ENCODE measurements at regions of chr1 and their contacts with region 1.

Region 1: DNA sequence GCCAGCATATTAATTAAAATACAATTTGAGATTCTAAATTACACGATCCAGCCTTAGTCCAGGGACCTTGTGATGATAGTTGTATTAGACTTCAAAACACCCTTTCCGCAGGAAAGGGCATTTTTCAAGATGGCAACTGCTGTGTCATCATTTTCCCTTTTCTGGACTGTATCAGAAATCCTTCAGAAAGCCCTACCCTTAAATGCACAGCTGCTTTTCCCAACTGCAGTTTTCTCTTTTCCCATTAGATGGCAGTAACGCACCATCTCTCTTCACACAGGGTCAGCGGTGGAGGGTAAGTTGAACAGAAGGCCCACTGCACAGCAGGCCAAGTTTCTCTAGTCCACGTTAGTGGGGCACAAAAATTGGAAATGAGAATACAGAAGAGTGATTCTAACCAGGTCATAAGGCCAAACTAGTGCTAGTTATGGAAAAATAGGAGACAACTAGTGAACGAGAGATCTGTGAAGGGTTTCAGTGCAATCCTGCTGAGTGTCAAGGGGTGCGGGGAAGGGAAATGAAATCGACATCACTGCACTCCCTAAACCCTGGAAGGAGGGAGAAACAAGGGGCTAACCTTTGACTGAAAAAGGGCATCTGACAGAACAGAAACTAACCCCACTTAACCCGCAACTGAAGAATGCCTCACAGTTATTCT is 22.1 kb upstream of the TDRD10 start:
- DNase-seq: peak; percentile 74
- H3K4me3 ChIP-seq: no peak overlapping the region
- H3K27ac ChIP-seq: no peak overlapping the region
- H3K4me1 ChIP-seq: peaks cover 11% of the 10 kb centered on the region
- H3K27me3 ChIP-seq: no peaks in the 10 kb centered on the region
- CTCF ChIP-seq: peak; percentile 96 to 98

Region 2: GRCh38 chr1:154324669-154325582 is 155.0 kb before region 1 on chr1 and contains the start of gene ATP8B2:
- CTCF ChIA-PET with region 1: no interaction called
- dilution Hi-C with region 1: no loop called
- in situ Hi-C with region 1: no loop called
- intact Hi-C with region 1: loop called (anchors 2 kb)
- DNase-seq: peak; percentile 53
- H3K4me3 ChIP-seq: peak within 1 kb of the TSS; percentile 55 to 65 (median 63)
- H3K27ac ChIP-seq: no peak within 1 kb of the TSS
- H3K4me1 ChIP-seq: peaks cover 29% of the 10 kb centered on the region
- H3K27me3 ChIP-seq: no peaks in the 10 kb centered on the region
- CTCF ChIP-seq: peak; percentile 79 to 92
- total RNA-seq, gene ATP8B2: 11.5 TPM

Region 3: DNA sequence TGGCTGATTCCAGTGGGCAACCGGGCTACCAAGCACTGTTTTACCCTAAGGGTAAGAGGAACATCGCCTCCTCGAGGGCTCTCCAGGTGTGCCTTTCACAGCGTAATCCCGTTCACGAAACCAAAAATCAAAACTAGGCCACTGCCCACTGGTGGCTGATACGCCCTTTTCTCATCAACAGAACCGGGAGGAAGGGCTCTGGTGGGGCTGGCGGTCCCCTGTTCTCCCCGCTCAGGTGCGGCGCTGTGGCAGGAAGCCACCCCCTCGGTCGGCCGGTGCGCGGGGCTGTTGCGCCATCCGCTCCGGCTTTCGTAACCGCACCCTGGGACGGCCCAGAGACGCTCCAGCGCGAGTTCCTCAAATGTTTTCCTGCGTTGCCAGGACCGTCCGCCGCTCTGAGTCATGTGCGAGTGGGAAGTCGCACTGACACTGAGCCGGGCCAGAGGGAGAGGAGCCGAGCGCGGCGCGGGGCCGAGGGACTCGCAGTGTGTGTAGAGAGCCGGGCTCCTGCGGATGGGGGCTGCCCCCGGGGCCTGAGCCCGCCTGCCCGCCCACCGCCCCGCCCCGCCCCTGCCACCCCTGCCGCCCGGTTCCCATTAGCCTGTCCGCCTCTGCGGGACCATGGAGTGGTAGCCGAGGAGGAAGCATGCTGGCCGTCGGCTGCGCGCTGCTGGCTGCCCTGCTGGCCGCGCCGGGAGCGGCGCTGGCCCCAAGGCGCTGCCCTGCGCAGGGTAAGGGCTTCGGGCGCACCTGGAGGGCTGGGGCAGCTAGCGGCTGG is 74.7 kb before region 1 on chr1 and contains the start of gene IL6R:
- CTCF ChIA-PET with region 1: interaction called, 5 read pairs
- dilution Hi-C with region 1: no loop called
- in situ Hi-C with region 1: no loop called
- intact Hi-C with region 1: loop called (anchors 1 kb)
- DNase-seq: peak; percentile 94
- H3K4me3 ChIP-seq: peak within 1 kb of the TSS; percentile 64 to 91 (median 84)
- H3K27ac ChIP-seq: peak within 1 kb of the TSS; percentile 83
- H3K4me1 ChIP-seq: peaks cover 33% of the 10 kb centered on the region
- H3K27me3 ChIP-seq: no peaks in the 10 kb centered on the region
- CTCF ChIP-seq: peak; percentile 14 to 63
- total RNA-seq, gene IL6R: 11.4 to 28.7 TPM

Region 4: DNA sequence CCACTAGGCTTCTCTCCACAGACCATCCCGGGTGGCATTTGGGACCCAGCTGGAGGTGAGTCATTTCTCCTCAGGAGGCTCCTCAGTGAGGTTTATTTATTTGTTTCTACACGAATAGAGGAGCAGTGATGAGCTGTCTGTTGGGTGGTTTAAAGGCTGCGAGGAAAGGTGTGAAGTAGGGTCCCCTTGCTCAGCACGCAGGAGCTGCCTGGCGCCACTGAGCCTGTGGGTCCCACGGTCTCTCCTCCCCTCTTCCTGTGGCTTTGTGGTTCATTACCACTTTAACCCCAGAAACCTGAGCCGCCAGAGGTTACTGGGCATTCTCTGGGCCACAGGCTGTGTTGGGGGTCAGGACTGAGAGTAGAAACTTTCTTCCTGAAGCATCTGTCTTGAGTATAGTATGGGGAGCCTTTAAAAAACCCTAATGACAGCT is 34.8 kb before region 1 on chr1:
- CTCF ChIA-PET with region 1: no interaction called
- dilution Hi-C with region 1: no loop called
- in situ Hi-C with region 1: no loop called
- intact Hi-C with region 1: no loop called
- DNase-seq: peak; percentile 46
- H3K4me3 ChIP-seq: no peak overlapping the region
- H3K27ac ChIP-seq: no peak overlapping the region
- H3K4me1 ChIP-seq: peaks cover 12% of the 10 kb centered on the region
- H3K27me3 ChIP-seq: no peaks in the 10 kb centered on the region
- CTCF ChIP-seq: no peak

Region 5: DNA sequence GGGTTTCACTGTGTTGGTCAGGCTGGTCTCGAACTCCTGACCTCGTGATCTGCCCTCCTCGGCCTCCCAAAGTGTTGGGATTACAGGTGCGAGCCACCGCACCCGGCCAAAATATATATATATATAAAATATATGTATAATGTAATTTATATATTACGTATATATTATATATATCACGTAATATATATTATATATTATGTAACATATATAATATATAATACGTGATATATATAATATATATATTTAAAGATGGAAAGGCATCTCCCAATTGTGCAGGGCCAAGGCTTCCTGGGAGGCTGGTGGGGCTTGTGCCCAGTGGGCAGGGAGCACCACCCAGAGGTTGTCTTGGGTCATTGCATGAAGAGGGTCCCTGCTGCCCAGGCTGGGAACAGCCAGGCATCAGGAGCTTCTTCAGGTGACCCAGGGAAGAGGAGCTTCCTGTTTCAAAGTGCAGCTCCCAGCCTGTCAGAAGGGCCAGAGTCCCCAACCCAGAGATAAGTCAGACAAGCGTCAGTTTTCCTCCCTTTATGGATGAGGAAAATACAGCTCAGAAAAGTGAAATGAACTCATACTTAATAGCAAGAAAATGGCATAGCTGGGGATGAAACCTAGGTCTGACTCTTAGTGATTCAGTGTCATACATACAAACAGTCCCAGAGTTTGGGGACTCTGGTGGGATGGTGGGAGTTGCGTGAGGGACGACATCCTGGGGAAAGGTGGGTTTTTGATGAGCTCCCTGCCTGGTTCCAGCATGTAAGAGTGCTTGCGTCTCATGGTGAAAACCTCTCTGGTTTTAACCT is 66.6 kb after region 1 on chr1:
- CTCF ChIA-PET with region 1: interaction called, 15 read pairs
- dilution Hi-C with region 1: no loop called
- in situ Hi-C with region 1: no loop called
- intact Hi-C with region 1: loop called (anchors 1 kb)
- DNase-seq: peak; percentile 44
- H3K4me3 ChIP-seq: no peak overlapping the region
- H3K27ac ChIP-seq: no peak overlapping the region
- H3K4me1 ChIP-seq: peaks cover 13% of the 10 kb centered on the region
- H3K27me3 ChIP-seq: no peaks in the 10 kb centered on the region
- CTCF ChIP-seq: peak; percentile 55 to 81

Region 6: DNA sequence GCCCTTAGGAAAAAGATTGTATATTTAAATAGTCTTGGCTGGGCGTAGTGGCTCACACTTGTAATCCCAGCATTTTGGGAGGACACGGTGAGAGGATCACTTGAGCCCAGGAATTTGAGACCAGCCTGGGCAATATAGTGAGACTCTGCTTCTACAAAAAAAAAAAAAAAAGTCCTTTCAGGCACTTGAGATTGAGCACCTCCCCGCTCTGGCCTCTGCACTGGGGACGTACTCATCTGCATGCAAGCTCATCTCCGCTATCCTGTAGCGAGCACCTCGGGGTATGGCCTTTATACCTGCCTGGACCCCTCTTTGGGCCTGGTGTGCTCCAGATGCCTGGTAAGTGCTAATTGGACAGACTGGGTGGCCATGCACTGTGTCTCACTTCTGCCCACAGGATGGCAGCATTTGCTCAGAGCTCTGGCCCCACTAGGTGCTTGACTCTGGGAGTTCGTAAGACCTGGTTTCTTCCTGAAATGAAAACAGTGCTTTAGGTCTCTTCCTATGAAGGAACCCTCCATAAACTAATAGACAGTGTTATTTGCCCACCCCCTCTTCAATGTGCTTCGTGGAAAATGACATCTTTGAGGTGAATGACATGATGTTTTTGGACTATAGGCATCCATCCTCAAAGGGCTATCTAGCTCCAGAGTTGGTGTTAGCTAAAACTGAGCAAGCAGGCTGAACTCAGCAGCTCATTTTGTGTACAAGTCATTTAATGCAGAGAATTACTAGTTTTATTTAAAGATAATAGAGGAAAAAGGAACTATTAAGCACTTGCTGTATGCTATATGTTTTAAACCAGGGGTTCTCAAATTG is 189.8 kb after region 1 on chr1:
- CTCF ChIA-PET with region 1: no interaction called
- dilution Hi-C with region 1: no loop called
- in situ Hi-C with region 1: no loop called
- intact Hi-C with region 1: loop called (anchors 2 kb)
- DNase-seq: peak; percentile 57
- H3K4me3 ChIP-seq: no peak overlapping the region
- H3K27ac ChIP-seq: no peak overlapping the region
- H3K4me1 ChIP-seq: no peaks in the 10 kb centered on the region
- H3K27me3 ChIP-seq: no peaks in the 10 kb centered on the region
- CTCF ChIP-seq: peak; percentile 89 to 93

Region 7: DNA sequence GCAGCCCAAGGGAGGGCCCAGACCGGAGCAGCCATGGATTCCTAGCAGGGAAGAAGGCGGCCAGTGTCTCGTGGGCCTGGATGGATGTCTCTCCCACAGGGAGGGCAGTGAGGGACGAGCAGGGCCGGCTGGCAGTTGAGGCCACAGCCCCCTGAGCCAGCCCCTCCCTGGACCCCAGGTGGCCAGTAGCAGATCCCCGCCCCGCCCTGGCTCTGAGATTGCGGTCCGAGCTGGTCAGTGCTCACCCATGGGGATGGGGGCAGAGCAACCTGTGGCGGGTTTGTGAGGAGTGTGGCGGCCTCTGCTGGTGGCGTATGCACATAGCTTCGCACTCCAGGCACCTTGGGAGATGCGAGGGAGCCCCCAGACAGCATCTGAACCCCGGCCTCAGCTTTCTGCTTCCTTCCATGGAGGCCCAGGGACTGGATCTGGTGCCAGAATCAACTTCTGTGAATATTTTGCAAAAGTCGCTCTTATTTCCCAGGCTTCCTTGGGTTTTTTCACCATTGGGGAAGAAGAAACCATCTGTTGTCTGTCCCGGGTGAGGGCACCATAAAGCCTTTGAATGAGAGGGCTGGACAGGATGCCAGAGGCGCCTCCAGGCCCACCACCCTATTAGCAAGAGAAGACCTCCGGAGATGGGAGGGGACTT is 398.6 kb after region 1 on chr1:
- CTCF ChIA-PET with region 1: no interaction called
- dilution Hi-C with region 1: no loop called
- in situ Hi-C with region 1: no loop called
- intact Hi-C with region 1: loop called (anchors 2 kb)
- DNase-seq: peak; percentile 36
- H3K4me3 ChIP-seq: no peak overlapping the region
- H3K27ac ChIP-seq: no peak overlapping the region
- H3K4me1 ChIP-seq: no peaks in the 10 kb centered on the region
- H3K27me3 ChIP-seq: no peaks in the 10 kb centered on the region
- CTCF ChIP-seq: peak; percentile 78 to 85

Region 8: GRCh38 chr1:155084722-155085503 is 605.0 kb after region 1 on chr1:
- CTCF ChIA-PET with region 1: no interaction called
- dilution Hi-C with region 1: no loop called
- in situ Hi-C with region 1: no loop called
- intact Hi-C with region 1: loop called (anchors 1 kb)
- DNase-seq: peak; percentile 90
- H3K4me3 ChIP-seq: peak overlapping the region; percentile 71 to 86 (median 73)
- H3K27ac ChIP-seq: peak overlapping the region; percentile 70
- H3K4me1 ChIP-seq: peaks cover 46% of the 10 kb centered on the region
- H3K27me3 ChIP-seq: peaks cover 20% of the 10 kb centered on the region
- CTCF ChIP-seq: peak; percentile 75 to 89

Measured in mammary epithelial cell (primary cell).